ENCODE measurements at regions of chr5 and their contacts with region 1.

Region 1: GRCh38 chr5:154202379-154203260 is 12.1 kb downstream of the GALNT10 start:
- DNase-seq: peak; percentile 77
- H3K4me3 Mint-ChIP-seq: peak overlapping the region; percentile 39
- H3K27ac Mint-ChIP-seq: peak overlapping the region; percentile 72
- H3K4me1 Mint-ChIP-seq: peaks cover 60% of the 10 kb centered on the region
- H3K27me3 Mint-ChIP-seq: no peaks in the 10 kb centered on the region

Region 2: GRCh38 chr5:154221371-154221896 is 18.8 kb after region 1 on chr5:
- CTCF ChIA-PET with region 1: interaction called, 14 read pairs
- POLR2A ChIA-PET with region 1: interaction called, 3 read pairs
- intact Hi-C with region 1: loop called (anchors 2 kb)
- DNase-seq: peak; percentile 75
- H3K4me3 Mint-ChIP-seq: no peak overlapping the region
- H3K27ac Mint-ChIP-seq: peak overlapping the region; percentile 86
- H3K4me1 Mint-ChIP-seq: peaks cover 44% of the 10 kb centered on the region
- H3K27me3 Mint-ChIP-seq: no peaks in the 10 kb centered on the region

Measured in activated CD4-positive, alpha-beta memory T cell treated with anti-CD3 and anti-CD28 coated beads for 36 hours (primary cell).